CD4-positive, alpha-beta T cell (primary cell): ENCODE measurements at regions of chr2 and their contacts with region 1.

Region 1: GRCh38 chr2:7567646-7568045 is 650.4 kb downstream of the RNF144A start:
- DNase-seq: peak; percentile 7 to 75 (median 54)
- ATAC-seq: peak; percentile 88
- H3K4me3 ChIP-seq: no peak overlapping the region
- H3K4me3 Mint-ChIP-seq: peak overlapping the region; percentile 43
- H3K27ac ChIP-seq: peak overlapping the region; percentile 52 to 62
- H3K27ac Mint-ChIP-seq: peak overlapping the region; percentile 91
- H3K4me1 ChIP-seq: peaks cover 31% of the 10 kb centered on the region
- H3K4me1 Mint-ChIP-seq: peaks cover 67% of the 10 kb centered on the region
- H3K27me3 ChIP-seq: no peaks in the 10 kb centered on the region
- H3K27me3 Mint-ChIP-seq: no peaks in the 10 kb centered on the region
- CTCF ChIP-seq: peak; percentile 12

Region 2: GRCh38 chr2:7450188-7450832 is 117.3 kb before region 1 on chr2:
- CTCF ChIA-PET with region 1: no interaction called
- POLR2A ChIA-PET with region 1: interaction called, 24 read pairs
- intact Hi-C with region 1: no loop called
- DNase-seq: peak in 7 of 14 experiments; percentile 23 to 76 (median 54)
- ATAC-seq: peak; percentile 81
- H3K4me3 ChIP-seq: no peak overlapping the region
- H3K4me3 Mint-ChIP-seq: peak overlapping the region; percentile 81
- H3K27ac ChIP-seq: peak overlapping the region; percentile 44 to 68
- H3K27ac Mint-ChIP-seq: peak overlapping the region; percentile 89
- H3K4me1 ChIP-seq: peaks cover 54% of the 10 kb centered on the region
- H3K4me1 Mint-ChIP-seq: peaks cover 73% of the 10 kb centered on the region
- H3K27me3 ChIP-seq: no peaks in the 10 kb centered on the region
- H3K27me3 Mint-ChIP-seq: no peaks in the 10 kb centered on the region
- CTCF ChIP-seq: no peak

Region 3: DNA sequence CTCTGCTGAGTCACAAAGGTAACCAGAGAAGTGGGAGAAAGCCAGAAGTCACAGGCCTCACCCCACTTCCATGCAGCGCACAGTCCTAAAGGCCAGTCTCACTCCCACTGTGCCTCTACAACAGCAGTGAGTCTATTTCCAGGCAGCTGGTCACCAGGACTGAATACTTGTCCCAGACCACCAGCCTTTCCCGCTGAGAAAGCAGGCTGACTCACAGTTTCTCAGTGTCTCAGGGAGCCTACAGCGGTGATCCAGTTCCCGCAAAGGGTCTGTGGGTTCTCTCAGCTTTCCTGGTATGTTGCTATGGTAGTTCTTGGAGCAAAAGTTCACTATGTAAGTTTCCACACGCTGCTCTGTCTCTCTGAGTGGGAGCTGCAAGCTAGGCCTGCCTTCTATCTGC is 27.9 kb before region 1 on chr2:
- CTCF ChIA-PET with region 1: interaction called, 3 read pairs
- POLR2A ChIA-PET with region 1: interaction called, 20 read pairs
- intact Hi-C with region 1: no loop called
- DNase-seq: no peak
- ATAC-seq: no peak
- H3K4me3 ChIP-seq: no peak overlapping the region
- H3K4me3 Mint-ChIP-seq: peak overlapping the region; percentile 77
- H3K27ac ChIP-seq: no peak overlapping the region
- H3K27ac Mint-ChIP-seq: peak overlapping the region; percentile 90
- H3K4me1 ChIP-seq: peaks cover 6% of the 10 kb centered on the region
- H3K4me1 Mint-ChIP-seq: peaks cover 54% of the 10 kb centered on the region
- H3K27me3 ChIP-seq: no peaks in the 10 kb centered on the region
- H3K27me3 Mint-ChIP-seq: no peaks in the 10 kb centered on the region
- CTCF ChIP-seq: no peak

Region 4: GRCh38 chr2:7672027-7672684 is 104.5 kb after region 1 on chr2:
- CTCF ChIA-PET with region 1: interaction called, 4 read pairs
- POLR2A ChIA-PET with region 1: interaction called, 11 read pairs
- intact Hi-C with region 1: loop called (anchors 5 to 10 kb)
- DNase-seq: peak; percentile 5 to 75 (median 39)
- ATAC-seq: peak; percentile 44
- H3K4me3 ChIP-seq: no peak overlapping the region
- H3K4me3 Mint-ChIP-seq: peak overlapping the region; percentile 57
- H3K27ac ChIP-seq: no peak overlapping the region
- H3K27ac Mint-ChIP-seq: peak overlapping the region; percentile 69
- H3K4me1 ChIP-seq: peaks cover 25% of the 10 kb centered on the region
- H3K4me1 Mint-ChIP-seq: peaks cover 32% of the 10 kb centered on the region
- H3K27me3 ChIP-seq: no peaks in the 10 kb centered on the region
- H3K27me3 Mint-ChIP-seq: no peaks in the 10 kb centered on the region
- CTCF ChIP-seq: peak; percentile 74